ENCODE measurements at regions of chr6 and their contacts with region 1.

Region 1: GRCh38 chr6:103356531-103356930 is 1503.2 kb downstream of the HACE1 start:
- DNase-seq: no peak
- ATAC-seq: no peak
- H3K4me3 ChIP-seq: no peak overlapping the region
- H3K4me3 Mint-ChIP-seq: no peak overlapping the region
- H3K27ac ChIP-seq: no peak overlapping the region
- H3K27ac Mint-ChIP-seq: no peak overlapping the region
- H3K4me1 ChIP-seq: no peaks in the 10 kb centered on the region
- H3K4me1 Mint-ChIP-seq: no peaks in the 10 kb centered on the region
- H3K27me3 ChIP-seq: no peaks in the 10 kb centered on the region
- H3K27me3 Mint-ChIP-seq: no peaks in the 10 kb centered on the region

Region 2: GRCh38 chr6:102562713-102563112 is 793.8 kb before region 1 on chr6:
- CTCF ChIA-PET with region 1: no interaction called
- POLR2A ChIA-PET with region 1: interaction called in 1 of 2 experiments, 10 read pairs
- DNase-seq: no peak
- ATAC-seq: no peak
- H3K4me3 ChIP-seq: no peak overlapping the region
- H3K4me3 Mint-ChIP-seq: no peak overlapping the region
- H3K27ac ChIP-seq: no peak overlapping the region
- H3K27ac Mint-ChIP-seq: no peak overlapping the region
- H3K4me1 ChIP-seq: no peaks in the 10 kb centered on the region
- H3K4me1 Mint-ChIP-seq: no peaks in the 10 kb centered on the region
- H3K27me3 ChIP-seq: no peaks in the 10 kb centered on the region
- H3K27me3 Mint-ChIP-seq: no peaks in the 10 kb centered on the region

Measured in T-cell (primary cell).